Calu3 (cell line): ENCODE measurements at regions of chr1 and their contacts with region 1.

Region 1: DNA sequence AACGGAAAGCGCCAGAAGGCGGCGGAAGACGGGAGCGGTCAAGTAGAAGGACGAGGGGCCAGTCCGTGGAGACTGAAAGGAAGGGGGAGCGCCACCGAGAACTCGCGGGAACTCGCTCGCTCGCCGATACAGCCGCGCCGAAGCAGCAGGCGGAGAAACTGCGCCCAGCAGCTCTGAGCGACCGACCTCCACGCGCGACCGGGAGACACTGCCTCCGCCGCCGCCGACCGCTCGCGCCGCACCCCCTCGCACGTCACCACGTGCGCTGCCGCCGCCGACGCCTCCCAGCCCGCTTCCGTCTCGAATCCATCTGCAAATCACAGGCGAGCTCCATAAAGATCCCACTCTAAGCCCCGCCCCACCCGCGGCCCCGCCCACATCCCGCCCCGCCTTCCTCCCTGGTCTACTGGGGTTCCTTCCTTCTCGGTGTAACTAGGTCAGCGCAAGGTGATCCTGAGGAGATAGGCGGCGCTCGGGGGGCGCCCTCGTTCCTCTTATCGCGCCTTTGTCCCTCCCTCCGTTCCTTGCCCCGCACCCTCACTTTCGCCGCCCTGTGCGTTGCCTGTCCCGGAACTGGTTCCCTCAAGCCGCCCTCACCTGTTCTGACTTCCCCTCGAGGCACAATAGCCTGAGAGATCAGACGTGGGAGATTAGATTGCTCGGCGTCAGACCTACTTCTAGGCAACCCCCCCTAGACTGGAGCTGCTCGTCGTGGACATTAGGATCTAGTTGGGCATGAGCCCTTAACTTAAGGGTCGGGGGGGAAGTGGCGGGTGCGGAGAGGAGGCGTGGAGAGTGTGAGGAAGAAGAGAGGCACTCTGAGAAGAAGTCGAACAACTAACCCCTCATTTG is at the start of gene IVNS1ABP:
- DNase-seq: peak; percentile 97
- H3K4me3 Mint-ChIP-seq: peak within 1 kb of the TSS; percentile 99
- H3K27ac Mint-ChIP-seq: peak within 1 kb of the TSS; percentile 92
- H3K4me1 Mint-ChIP-seq: peaks cover 43% of the 10 kb centered on the region
- H3K27me3 Mint-ChIP-seq: no peaks in the 10 kb centered on the region
- CTCF ChIP-seq: no peak
- total RNA-seq, gene IVNS1ABP: 121 and 135 TPM in 2 replicates

Region 2: DNA sequence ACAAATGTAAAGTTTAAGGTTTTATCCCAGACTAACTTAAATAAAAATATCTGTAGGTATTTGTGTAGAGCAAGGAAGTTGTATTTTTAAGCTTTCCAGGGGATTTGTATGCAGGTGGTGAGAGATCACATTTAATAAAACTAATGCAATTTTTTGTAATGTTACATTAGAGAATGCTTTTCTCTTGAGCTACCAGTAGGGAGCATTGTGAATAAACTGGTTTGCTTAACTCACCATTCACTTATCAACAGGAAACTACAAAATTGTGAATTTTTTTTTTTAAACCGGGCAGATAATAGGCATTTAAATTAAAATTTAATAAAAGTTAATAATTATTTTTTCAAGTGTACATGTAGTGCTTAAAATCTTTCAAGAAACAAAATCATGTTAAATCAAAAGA is 78.8 kb before region 1 on chr1:
- CTCF ChIA-PET with region 1: interaction called, 3 read pairs
- intact Hi-C with region 1: loop called (anchors 5 kb)
- DNase-seq: no peak
- H3K4me3 Mint-ChIP-seq: no peak overlapping the region
- H3K27ac Mint-ChIP-seq: no peak overlapping the region
- H3K4me1 Mint-ChIP-seq: no peaks in the 10 kb centered on the region
- H3K27me3 Mint-ChIP-seq: no peaks in the 10 kb centered on the region
- CTCF ChIP-seq: peak; percentile 14

Region 3: DNA sequence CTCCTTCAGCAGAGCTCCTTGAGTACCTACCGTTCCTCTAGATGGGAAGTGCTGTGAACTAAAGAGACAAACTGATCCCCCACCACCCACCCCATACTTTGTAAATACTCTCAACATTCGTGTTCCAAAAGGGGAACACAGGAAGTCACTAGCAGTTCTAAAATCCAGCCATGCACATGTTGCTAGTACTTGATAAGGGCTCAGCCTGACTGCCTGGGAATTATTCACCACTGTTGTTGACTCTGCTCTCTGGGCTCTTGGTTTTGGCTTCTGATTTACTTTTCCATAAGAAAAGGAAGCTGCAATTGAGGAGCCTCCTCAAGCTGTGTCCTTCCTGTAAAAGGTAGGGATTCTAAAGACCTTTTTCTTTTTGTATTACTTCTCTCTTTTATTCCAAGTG is 67.7 kb before region 1 on chr1:
- CTCF ChIA-PET with region 1: no interaction called
- intact Hi-C with region 1: no loop called
- DNase-seq: no peak
- H3K4me3 Mint-ChIP-seq: no peak overlapping the region
- H3K27ac Mint-ChIP-seq: no peak overlapping the region
- H3K4me1 Mint-ChIP-seq: no peaks in the 10 kb centered on the region
- H3K27me3 Mint-ChIP-seq: no peaks in the 10 kb centered on the region
- CTCF ChIP-seq: no peak

Region 4: DNA sequence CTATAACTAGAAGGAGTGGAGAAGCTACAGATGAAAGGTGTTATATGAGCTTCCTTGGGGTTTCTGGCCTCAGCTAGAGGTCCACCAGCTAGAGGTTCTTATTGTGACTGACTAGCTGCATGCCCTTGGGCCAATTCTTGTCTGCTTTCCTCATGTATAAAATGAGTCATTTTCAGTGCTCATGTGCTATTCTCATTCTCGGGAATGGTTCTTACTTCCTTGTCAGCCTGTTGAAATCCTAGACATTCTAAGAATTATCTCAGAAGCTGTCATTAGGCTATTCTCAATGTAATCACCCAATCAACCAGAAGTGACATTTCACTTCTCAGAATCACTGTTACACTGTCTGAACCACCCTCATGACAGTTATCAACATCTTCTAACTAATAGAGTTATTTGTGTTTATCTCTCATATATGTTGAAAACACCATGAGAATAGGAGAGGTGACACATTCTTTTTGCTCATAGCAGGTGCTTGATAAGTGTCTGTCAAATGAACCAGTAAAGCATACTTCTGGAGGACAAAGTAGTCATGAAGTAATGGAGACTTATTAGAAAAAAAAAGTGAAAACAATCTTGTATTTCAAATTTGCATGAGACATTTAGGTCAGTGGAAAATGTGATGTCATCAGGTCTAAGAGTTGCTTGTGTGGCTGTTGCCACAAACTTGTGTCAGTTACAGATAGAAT is 122.6 kb after region 1 on chr1:
- CTCF ChIA-PET with region 1: interaction called, 7 read pairs
- intact Hi-C with region 1: loop called (anchors 2 kb)
- DNase-seq: peak; percentile 61
- H3K4me3 Mint-ChIP-seq: no peak overlapping the region
- H3K27ac Mint-ChIP-seq: no peak overlapping the region
- H3K4me1 Mint-ChIP-seq: no peaks in the 10 kb centered on the region
- H3K27me3 Mint-ChIP-seq: no peaks in the 10 kb centered on the region
- CTCF ChIP-seq: no peak

Region 5: GRCh38 chr1:185559684-185560331 is 242.5 kb after region 1 on chr1:
- CTCF ChIA-PET with region 1: interaction called, 18 read pairs
- intact Hi-C with region 1: loop called (anchors 5 kb)
- DNase-seq: peak; percentile 56
- H3K4me3 Mint-ChIP-seq: no peak overlapping the region
- H3K27ac Mint-ChIP-seq: no peak overlapping the region
- H3K4me1 Mint-ChIP-seq: peaks cover 47% of the 10 kb centered on the region
- H3K27me3 Mint-ChIP-seq: no peaks in the 10 kb centered on the region
- CTCF ChIP-seq: peak; percentile 26

Region 6: DNA sequence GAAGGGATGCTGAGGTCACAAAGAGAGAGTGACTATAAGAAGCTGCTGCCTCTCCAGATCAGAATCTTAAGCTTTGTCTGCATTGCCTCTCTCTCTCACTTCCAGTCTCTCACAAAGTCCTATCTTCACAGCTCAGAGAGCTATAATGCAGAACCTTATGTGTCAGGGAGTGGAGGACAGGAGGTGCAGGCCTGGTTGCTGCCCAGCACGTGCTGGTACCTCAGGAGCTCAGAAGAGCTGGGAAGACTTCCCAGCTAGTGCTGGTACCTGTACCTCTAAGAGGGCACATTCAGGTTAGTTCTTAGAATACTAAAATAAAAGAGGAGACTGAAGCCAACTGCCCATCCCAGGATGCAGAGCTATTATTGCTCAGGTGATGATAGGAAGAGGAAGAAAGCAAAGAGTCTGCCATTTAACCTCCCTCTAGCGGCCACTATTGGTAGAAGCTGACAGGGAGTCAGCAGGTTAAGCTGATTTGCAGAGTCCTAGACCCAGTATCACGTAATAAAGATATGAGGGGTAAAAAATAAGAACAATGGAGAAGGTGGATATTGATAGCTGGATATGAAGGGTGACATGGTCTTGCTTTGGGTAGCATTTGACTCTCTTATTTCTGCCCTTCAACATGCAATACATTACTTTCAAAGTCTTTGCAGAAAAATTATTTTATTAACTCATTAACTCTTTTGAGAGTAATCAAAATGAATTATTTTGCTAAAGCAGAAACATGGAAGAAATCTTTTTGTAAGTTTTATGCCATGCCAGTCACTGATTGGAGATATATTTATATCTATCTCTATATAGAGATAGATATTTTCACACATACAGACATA is 278.8 kb after region 1 on chr1:
- CTCF ChIA-PET with region 1: interaction called, 51 read pairs
- intact Hi-C with region 1: loop called (anchors 2 kb)
- DNase-seq: peak; percentile 78
- H3K4me3 Mint-ChIP-seq: no peak overlapping the region
- H3K27ac Mint-ChIP-seq: no peak overlapping the region
- H3K4me1 Mint-ChIP-seq: peaks cover 40% of the 10 kb centered on the region
- H3K27me3 Mint-ChIP-seq: no peaks in the 10 kb centered on the region
- CTCF ChIP-seq: peak; percentile 75

Region 7: GRCh38 chr1:185670187-185670627 is 352.9 kb after region 1 on chr1:
- CTCF ChIA-PET with region 1: interaction called, 10 read pairs
- intact Hi-C with region 1: loop called (anchors 2 kb)
- DNase-seq: peak; percentile 56
- H3K4me3 Mint-ChIP-seq: no peak overlapping the region
- H3K27ac Mint-ChIP-seq: no peak overlapping the region
- H3K4me1 Mint-ChIP-seq: peaks cover 12% of the 10 kb centered on the region
- H3K27me3 Mint-ChIP-seq: no peaks in the 10 kb centered on the region
- CTCF ChIP-seq: peak; percentile 39

Region 8: GRCh38 chr1:186212544-186213226 is 895.4 kb after region 1 on chr1:
- CTCF ChIA-PET with region 1: no interaction called
- intact Hi-C with region 1: loop called (anchors 10 kb)
- DNase-seq: peak; percentile 63
- H3K4me3 Mint-ChIP-seq: no peak overlapping the region
- H3K27ac Mint-ChIP-seq: no peak overlapping the region
- H3K4me1 Mint-ChIP-seq: no peaks in the 10 kb centered on the region
- H3K27me3 Mint-ChIP-seq: no peaks in the 10 kb centered on the region
- CTCF ChIP-seq: peak; percentile 78